Activated CD4-positive, alpha-beta T cell treated with anti-CD3 and anti-CD28 coated beads for 36 hours (primary cell): ENCODE measurements at regions of chr1 and their contacts with region 1.

Region 1: GRCh38 chr1:160768295-160768657 is 27.7 kb upstream of the LY9 start:
- DNase-seq: peak; percentile 93
- ATAC-seq: peak; percentile 77
- H3K4me3 Mint-ChIP-seq: peak overlapping the region; percentile 75
- H3K27ac Mint-ChIP-seq: peak overlapping the region; percentile 99
- H3K4me1 Mint-ChIP-seq: peaks cover 44% of the 10 kb centered on the region
- H3K27me3 Mint-ChIP-seq: no peaks in the 10 kb centered on the region

Region 2: GRCh38 chr1:160070243-160071163 is 697.8 kb before region 1 on chr1:
- CTCF ChIA-PET with region 1: no interaction called
- POLR2A ChIA-PET with region 1: no interaction called
- intact Hi-C with region 1: no loop called
- DNase-seq: peak; percentile 71
- ATAC-seq: peak; percentile 71
- H3K4me3 Mint-ChIP-seq: peak overlapping the region; percentile 71
- H3K27ac Mint-ChIP-seq: peak overlapping the region; percentile 18
- H3K4me1 Mint-ChIP-seq: peaks cover 21% of the 10 kb centered on the region
- H3K27me3 Mint-ChIP-seq: peaks cover 38% of the 10 kb centered on the region

Region 3: GRCh38 chr1:160534823-160535605 is 233.3 kb before region 1 on chr1:
- CTCF ChIA-PET with region 1: no interaction called
- POLR2A ChIA-PET with region 1: no interaction called
- intact Hi-C with region 1: no loop called
- DNase-seq: no peak
- ATAC-seq: no peak
- H3K4me3 Mint-ChIP-seq: no peak overlapping the region
- H3K27ac Mint-ChIP-seq: no peak overlapping the region
- H3K4me1 Mint-ChIP-seq: peaks cover 25% of the 10 kb centered on the region
- H3K27me3 Mint-ChIP-seq: no peaks in the 10 kb centered on the region

Region 4: DNA sequence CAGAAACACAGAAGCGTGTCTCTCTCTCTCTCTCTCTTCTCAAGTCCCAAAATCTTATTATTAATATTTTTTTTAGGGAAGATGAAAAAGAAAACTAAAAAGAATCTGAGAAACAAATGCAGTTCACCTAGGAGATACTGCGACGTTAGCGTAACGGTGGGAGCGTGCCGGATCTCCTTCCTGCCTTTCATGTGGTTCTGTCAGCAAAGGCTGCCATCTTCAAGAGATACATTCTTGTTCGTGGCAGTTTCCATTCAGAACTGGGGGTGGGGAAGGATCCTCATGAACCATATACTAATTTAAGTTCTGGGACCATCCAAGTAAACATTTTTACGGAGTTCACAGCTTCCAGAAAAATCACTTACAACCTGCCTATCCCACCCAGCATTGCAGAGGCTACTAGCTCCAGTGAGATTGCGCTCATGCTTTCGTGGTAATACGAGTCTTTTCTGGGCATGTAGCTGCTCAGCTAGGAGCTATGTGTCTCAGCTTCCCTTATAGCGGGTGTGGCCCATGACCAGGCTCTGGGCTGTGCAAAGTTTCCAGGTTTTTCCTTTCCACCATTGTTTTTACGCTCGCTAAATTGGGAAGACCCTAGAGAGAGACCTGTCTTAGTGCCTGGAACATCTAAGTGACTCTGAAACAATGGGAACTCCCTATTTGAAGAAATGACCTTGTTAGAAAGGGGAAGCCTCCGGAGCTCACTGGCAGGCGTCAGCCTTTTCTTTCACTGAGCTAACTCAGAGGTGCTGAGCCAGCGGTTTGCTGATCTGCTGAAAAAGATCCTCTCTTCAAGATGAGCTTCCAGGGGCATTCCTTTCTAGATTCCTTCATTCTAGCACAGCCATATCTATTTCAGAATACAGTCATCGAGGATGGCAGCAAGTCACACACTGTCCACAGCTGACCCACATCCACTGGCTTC is 138.7 kb before region 1 on chr1:
- CTCF ChIA-PET with region 1: no interaction called
- POLR2A ChIA-PET with region 1: no interaction called
- intact Hi-C with region 1: loop called (anchors 2 to 5 kb)
- DNase-seq: peak; percentile 83
- ATAC-seq: peak; percentile 22
- H3K4me3 Mint-ChIP-seq: peak overlapping the region; percentile 65
- H3K27ac Mint-ChIP-seq: peak overlapping the region; percentile 99
- H3K4me1 Mint-ChIP-seq: peaks cover 97% of the 10 kb centered on the region
- H3K27me3 Mint-ChIP-seq: no peaks in the 10 kb centered on the region

Region 5: GRCh38 chr1:160704250-160704649 is 64.0 kb before region 1 on chr1:
- CTCF ChIA-PET with region 1: interaction called, 23 read pairs
- POLR2A ChIA-PET with region 1: interaction called, 5 read pairs
- intact Hi-C with region 1: no loop called
- DNase-seq: no peak
- ATAC-seq: no peak
- H3K4me3 Mint-ChIP-seq: no peak overlapping the region
- H3K27ac Mint-ChIP-seq: peak overlapping the region; percentile 70
- H3K4me1 Mint-ChIP-seq: peaks cover 68% of the 10 kb centered on the region
- H3K27me3 Mint-ChIP-seq: no peaks in the 10 kb centered on the region

Region 6: GRCh38 chr1:160733898-160734297 is 34.4 kb before region 1 on chr1:
- CTCF ChIA-PET with region 1: interaction called, 176 read pairs
- POLR2A ChIA-PET with region 1: interaction called, 3 read pairs
- intact Hi-C with region 1: no loop called
- DNase-seq: no peak
- ATAC-seq: no peak
- H3K4me3 Mint-ChIP-seq: peak overlapping the region; percentile 11
- H3K27ac Mint-ChIP-seq: peak overlapping the region; percentile 64
- H3K4me1 Mint-ChIP-seq: peaks cover 50% of the 10 kb centered on the region
- H3K27me3 Mint-ChIP-seq: no peaks in the 10 kb centered on the region

Region 7: DNA sequence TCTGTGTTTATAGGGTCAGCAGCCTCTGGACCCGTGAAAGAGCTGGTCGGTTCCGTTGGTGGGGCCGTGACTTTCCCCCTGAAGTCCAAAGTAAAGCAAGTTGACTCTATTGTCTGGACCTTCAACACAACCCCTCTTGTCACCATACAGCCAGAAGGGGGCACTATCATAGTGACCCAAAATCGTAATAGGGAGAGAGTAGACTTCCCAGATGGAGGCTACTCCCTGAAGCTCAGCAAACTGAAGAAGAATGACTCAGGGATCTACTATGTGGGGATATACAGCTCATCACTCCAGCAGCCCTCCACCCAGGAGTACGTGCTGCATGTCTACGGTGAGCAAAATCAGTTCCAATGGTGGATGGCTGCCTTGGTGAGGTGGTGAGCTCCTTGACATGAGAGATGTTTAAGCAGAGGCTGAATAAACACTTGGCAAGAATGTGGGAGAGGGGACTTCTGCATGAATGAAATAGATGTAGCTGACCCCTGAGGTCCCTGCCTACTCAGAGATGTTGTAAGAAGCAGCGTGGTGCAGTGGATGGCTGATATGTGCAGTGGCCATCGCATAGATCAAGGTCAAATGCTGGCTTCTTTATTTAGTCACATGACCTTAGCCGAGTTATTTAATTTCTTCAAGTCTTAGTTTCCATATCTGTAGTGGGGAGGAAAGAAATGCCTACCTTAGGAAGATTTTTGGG is 19.9 kb before region 1 on chr1:
- CTCF ChIA-PET with region 1: interaction called, 26 read pairs
- POLR2A ChIA-PET with region 1: interaction called, 3 read pairs
- intact Hi-C with region 1: loop called (anchors 1 to 2 kb)
- DNase-seq: no peak
- ATAC-seq: no peak
- H3K4me3 Mint-ChIP-seq: no peak overlapping the region
- H3K27ac Mint-ChIP-seq: peak overlapping the region; percentile 53
- H3K4me1 Mint-ChIP-seq: peaks cover 86% of the 10 kb centered on the region
- H3K27me3 Mint-ChIP-seq: no peaks in the 10 kb centered on the region

Region 8: GRCh38 chr1:160795951-160796383 is 27.7 kb after region 1 on chr1 and contains the start of gene LY9:
- CTCF ChIA-PET with region 1: interaction called, 33 read pairs
- POLR2A ChIA-PET with region 1: interaction called, 3 read pairs
- intact Hi-C with region 1: loop called (anchors 1 to 2 kb)
- DNase-seq: peak; percentile 89
- ATAC-seq: peak; percentile 79
- H3K4me3 Mint-ChIP-seq: peak within 1 kb of the TSS; percentile 78
- H3K27ac Mint-ChIP-seq: peak within 1 kb of the TSS; percentile 95
- H3K4me1 Mint-ChIP-seq: peaks cover 61% of the 10 kb centered on the region
- H3K27me3 Mint-ChIP-seq: no peaks in the 10 kb centered on the region
- total RNA-seq, gene LY9: 10.0 to 11.0 TPM

Region 9: DNA sequence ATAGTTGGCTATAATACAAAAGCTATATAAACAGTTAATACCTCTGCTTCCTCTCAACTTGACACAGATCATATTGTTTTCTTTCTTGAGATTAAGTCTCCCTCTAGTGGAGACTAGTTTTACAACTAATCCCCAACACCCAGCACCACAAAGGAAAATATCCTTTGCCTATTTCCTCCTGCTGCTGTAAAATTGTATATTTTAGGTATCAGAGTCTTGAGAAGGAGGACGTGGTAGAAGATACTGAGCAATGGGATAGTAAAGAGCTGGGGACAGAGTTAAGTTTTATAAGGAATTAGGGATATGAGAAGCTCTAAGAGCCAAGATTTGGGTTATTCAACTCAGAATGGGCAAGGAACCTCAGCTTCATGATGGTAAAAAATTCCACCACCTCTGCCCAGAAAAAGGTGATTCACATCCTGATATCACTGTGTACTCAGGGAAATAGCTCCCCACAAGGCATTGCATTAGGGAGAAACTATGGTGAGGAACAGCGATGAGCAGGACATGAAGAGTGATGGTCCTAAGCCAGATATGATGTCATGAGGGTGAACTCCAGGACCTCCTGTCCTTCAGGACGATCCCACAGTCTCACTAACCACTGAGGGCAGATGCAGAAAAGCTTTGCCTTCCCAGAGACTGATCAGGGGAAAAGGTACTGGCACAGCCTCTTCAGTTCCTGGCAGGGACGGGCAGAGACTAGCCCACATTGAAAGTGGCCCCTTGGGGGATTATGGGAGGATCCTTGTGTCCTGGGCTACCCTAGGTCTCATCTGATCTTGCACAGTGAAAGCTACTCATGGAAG is 614.1 kb after region 1 on chr1:
- CTCF ChIA-PET with region 1: no interaction called
- POLR2A ChIA-PET with region 1: no interaction called
- intact Hi-C with region 1: no loop called
- DNase-seq: no peak
- ATAC-seq: peak; percentile 79
- H3K4me3 Mint-ChIP-seq: no peak overlapping the region
- H3K27ac Mint-ChIP-seq: peak overlapping the region; percentile 66
- H3K4me1 Mint-ChIP-seq: peaks cover 17% of the 10 kb centered on the region
- H3K27me3 Mint-ChIP-seq: no peaks in the 10 kb centered on the region